Activated CD8-positive, alpha-beta T cell treated with anti-CD3 and anti-CD28 coated beads for 36 hours (primary cell): ENCODE measurements at regions of chr22 and their contacts with region 1.

Region 1: GRCh38 chr22:39938509-39939111 is 21.6 kb upstream of the TMA7B start:
- DNase-seq: peak; percentile 82
- ATAC-seq: peak; percentile 38
- H3K4me3 Mint-ChIP-seq: peak overlapping the region; percentile 72
- H3K27ac Mint-ChIP-seq: peak overlapping the region; percentile 90
- H3K4me1 Mint-ChIP-seq: peaks cover 92% of the 10 kb centered on the region
- H3K27me3 Mint-ChIP-seq: no peaks in the 10 kb centered on the region
- CTCF ChIP-seq: no peak

Region 2: GRCh38 chr22:39954584-39955055 is 16.0 kb after region 1 on chr22:
- CTCF ChIA-PET with region 1: interaction called, 12 read pairs
- POLR2A ChIA-PET with region 1: interaction called, 19 read pairs
- intact Hi-C with region 1: no loop called
- DNase-seq: peak; percentile 64
- ATAC-seq: peak; percentile 32
- H3K4me3 Mint-ChIP-seq: no peak overlapping the region
- H3K27ac Mint-ChIP-seq: peak overlapping the region; percentile 58
- H3K4me1 Mint-ChIP-seq: peaks cover 88% of the 10 kb centered on the region
- H3K27me3 Mint-ChIP-seq: no peaks in the 10 kb centered on the region
- CTCF ChIP-seq: no peak